Activated CD4-positive, alpha-beta T cell treated with anti-CD3 and anti-CD28 coated beads for 36 hours (primary cell): ENCODE measurements at regions of chr3 and their contacts with region 1.

Region 1: GRCh38 chr3:180601688-180602666 is at the start of gene TTC14:
- DNase-seq: peak; percentile 96
- ATAC-seq: peak; percentile 96
- H3K4me3 Mint-ChIP-seq: peak within 1 kb of the TSS; percentile 98
- H3K27ac Mint-ChIP-seq: peak within 1 kb of the TSS; percentile 98
- H3K4me1 Mint-ChIP-seq: peaks cover 17% of the 10 kb centered on the region
- H3K27me3 Mint-ChIP-seq: peaks cover 4% of the 10 kb centered on the region
- total RNA-seq, gene TTC14: 38.0 to 41.2 TPM

Region 2: GRCh38 chr3:179653096-179653797 is 948.7 kb before region 1 on chr3:
- CTCF ChIA-PET with region 1: no interaction called
- POLR2A ChIA-PET with region 1: no interaction called
- intact Hi-C with region 1: loop called in 1 of 2 experiments (anchors 1 kb)
- DNase-seq: peak; percentile 81
- ATAC-seq: peak; percentile 69
- H3K4me3 Mint-ChIP-seq: peak overlapping the region; percentile 81
- H3K27ac Mint-ChIP-seq: peak overlapping the region; percentile 82
- H3K4me1 Mint-ChIP-seq: peaks cover 22% of the 10 kb centered on the region
- H3K27me3 Mint-ChIP-seq: peaks cover 7% of the 10 kb centered on the region

Region 3: DNA sequence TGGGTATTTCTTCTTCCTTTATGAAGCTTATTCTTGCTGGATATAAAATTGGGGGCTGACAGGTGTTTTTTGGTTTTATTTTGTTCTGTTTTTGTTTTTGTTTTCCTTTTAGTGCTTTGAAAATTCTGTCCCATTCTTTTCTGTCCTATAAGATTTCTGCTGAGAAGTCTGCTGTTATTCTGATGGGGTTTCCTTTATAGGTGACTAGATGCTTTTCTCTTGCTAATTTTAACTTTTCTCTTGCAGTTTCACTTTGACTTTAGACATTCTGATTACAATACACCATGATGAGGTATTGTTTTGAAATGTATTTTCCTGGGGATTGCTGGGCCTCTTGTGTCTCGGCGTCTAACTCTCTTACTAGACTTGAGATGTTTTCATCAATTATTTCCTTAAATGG is 22.7 kb after region 1 on chr3:
- CTCF ChIA-PET with region 1: no interaction called
- POLR2A ChIA-PET with region 1: interaction called, 3 read pairs
- intact Hi-C with region 1: loop called in 1 of 2 experiments (anchors 1 kb)
- DNase-seq: no peak
- ATAC-seq: peak; percentile 86
- H3K4me3 Mint-ChIP-seq: no peak overlapping the region
- H3K27ac Mint-ChIP-seq: peak overlapping the region; percentile 80
- H3K4me1 Mint-ChIP-seq: peaks cover 35% of the 10 kb centered on the region
- H3K27me3 Mint-ChIP-seq: no peaks in the 10 kb centered on the region

Region 4: DNA sequence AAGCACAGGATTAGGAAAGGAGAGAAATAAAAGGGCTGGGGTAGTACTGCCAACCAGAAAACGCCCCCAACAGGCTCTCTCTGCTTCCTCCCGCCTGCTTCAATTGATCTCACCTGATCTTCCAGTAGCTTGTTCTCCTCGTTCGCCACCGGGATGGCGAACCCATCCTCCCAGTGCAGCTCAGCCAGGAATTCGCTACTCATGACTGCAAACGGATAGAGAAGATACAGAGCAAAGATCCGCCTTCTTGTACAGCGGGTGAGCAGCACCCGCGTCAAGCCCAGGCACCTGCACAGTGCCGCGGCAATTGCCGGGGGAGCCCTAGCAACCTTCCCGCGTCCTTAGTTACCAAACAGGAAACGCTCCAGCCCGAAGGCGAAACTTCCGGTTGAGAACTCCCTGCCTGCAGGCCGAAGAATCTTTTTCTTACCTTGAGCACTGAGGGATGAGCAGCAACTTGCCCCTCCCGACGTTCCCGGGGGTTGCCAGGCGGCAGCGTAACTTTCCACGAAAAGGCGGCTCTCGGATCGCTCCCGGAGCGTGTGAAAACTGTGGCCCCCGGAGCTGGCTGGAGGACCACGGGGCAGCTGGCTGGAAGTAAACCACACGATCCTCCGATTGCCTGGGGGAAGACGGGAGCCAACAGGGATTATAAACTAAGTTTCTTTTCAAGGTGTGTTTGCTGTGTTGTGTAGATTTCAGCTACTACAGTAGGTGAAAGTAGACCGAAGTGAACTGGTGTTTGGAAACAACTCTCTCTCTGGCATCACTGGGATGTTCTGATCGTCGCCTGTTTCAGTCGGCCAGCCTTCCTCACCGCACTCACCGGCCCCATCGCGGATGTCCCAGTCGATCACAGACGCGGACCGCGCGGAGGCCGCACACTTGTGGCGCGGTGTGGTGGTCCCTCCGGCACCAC is 77.5 kb after region 1 on chr3 and contains the start of gene CCDC39:
- CTCF ChIA-PET with region 1: no interaction called
- POLR2A ChIA-PET with region 1: no interaction called
- intact Hi-C with region 1: loop called (anchors 1 kb)
- DNase-seq: peak; percentile 80
- ATAC-seq: peak; percentile 87
- H3K4me3 Mint-ChIP-seq: peak within 1 kb of the TSS; percentile 62
- H3K27ac Mint-ChIP-seq: no peak within 1 kb of the TSS
- H3K4me1 Mint-ChIP-seq: peaks cover 13% of the 10 kb centered on the region
- H3K27me3 Mint-ChIP-seq: peaks cover 49% of the 10 kb centered on the region
- total RNA-seq, gene CCDC39: not detected

Region 5: GRCh38 chr3:180989291-180990163 is 387.6 kb after region 1 on chr3 and contains the start of gene DNAJC19:
- CTCF ChIA-PET with region 1: no interaction called
- POLR2A ChIA-PET with region 1: no interaction called
- intact Hi-C with region 1: loop called (anchors 2 to 10 kb)
- DNase-seq: peak; percentile 94
- ATAC-seq: peak; percentile 97
- H3K4me3 Mint-ChIP-seq: peak within 1 kb of the TSS; percentile 86
- H3K27ac Mint-ChIP-seq: peak within 1 kb of the TSS; percentile 94
- H3K4me1 Mint-ChIP-seq: peaks cover 25% of the 10 kb centered on the region
- H3K27me3 Mint-ChIP-seq: peaks cover 5% of the 10 kb centered on the region
- total RNA-seq, gene DNAJC19: 55.0 to 80.7 TPM